A673 (cell line): ENCODE measurements at regions of chr9 and their contacts with region 1.

Region 1: GRCh38 chr9:29691758-29692407 is 2118.6 kb upstream of the C9orf72 start:
- DNase-seq: peak; percentile 89
- H3K4me3 ChIP-seq: no peak overlapping the region
- H3K27ac ChIP-seq: no peak overlapping the region
- H3K4me1 ChIP-seq: peaks cover 12% of the 10 kb centered on the region
- H3K27me3 ChIP-seq: no peaks in the 10 kb centered on the region
- CTCF ChIP-seq: peak; percentile 73

Region 2: DNA sequence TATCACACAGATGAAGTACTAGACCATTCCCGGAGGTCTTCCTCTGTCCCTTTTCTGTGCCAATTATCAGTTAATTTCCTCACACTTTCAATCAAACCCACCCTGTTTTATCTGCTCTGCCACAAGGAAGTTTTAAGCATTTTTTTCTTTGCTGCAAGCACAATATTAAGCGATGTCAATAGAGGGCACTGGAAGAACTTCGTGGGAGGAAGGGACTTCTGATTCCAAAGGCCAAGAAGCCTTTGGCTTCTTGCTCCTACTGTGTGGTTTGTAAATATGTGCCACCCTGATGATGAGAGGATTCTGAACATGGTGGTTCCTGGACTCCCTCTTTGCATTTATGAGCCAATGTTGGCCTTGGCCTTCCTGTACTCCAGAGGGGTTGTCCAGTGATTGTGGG is 406.1 kb before region 1 on chr9:
- CTCF ChIA-PET with region 1: no interaction called
- POLR2A ChIA-PET with region 1: no interaction called
- intact Hi-C with region 1: loop called (anchors 2 kb)
- DNase-seq: peak; percentile 63
- H3K4me3 ChIP-seq: no peak overlapping the region
- H3K27ac ChIP-seq: no peak overlapping the region
- H3K4me1 ChIP-seq: peaks cover 15% of the 10 kb centered on the region
- H3K27me3 ChIP-seq: no peaks in the 10 kb centered on the region
- CTCF ChIP-seq: peak; percentile 56

Region 3: GRCh38 chr9:29548436-29548835 is 143.4 kb before region 1 on chr9:
- CTCF ChIA-PET with region 1: no interaction called
- POLR2A ChIA-PET with region 1: no interaction called
- intact Hi-C with region 1: loop called (anchors 5 kb)
- DNase-seq: no peak
- H3K4me3 ChIP-seq: no peak overlapping the region
- H3K27ac ChIP-seq: no peak overlapping the region
- H3K4me1 ChIP-seq: no peaks in the 10 kb centered on the region
- H3K27me3 ChIP-seq: no peaks in the 10 kb centered on the region
- CTCF ChIP-seq: no peak

Region 4: GRCh38 chr9:29556317-29556716 is 135.6 kb before region 1 on chr9:
- CTCF ChIA-PET with region 1: no interaction called
- POLR2A ChIA-PET with region 1: no interaction called
- intact Hi-C with region 1: loop called (anchors 5 kb)
- DNase-seq: peak; percentile 94
- H3K4me3 ChIP-seq: no peak overlapping the region
- H3K27ac ChIP-seq: peak overlapping the region; percentile 81
- H3K4me1 ChIP-seq: peaks cover 20% of the 10 kb centered on the region
- H3K27me3 ChIP-seq: no peaks in the 10 kb centered on the region
- CTCF ChIP-seq: no peak

Region 5: GRCh38 chr9:29701971-29702370 is 10.1 kb after region 1 on chr9:
- CTCF ChIA-PET with region 1: no interaction called
- POLR2A ChIA-PET with region 1: no interaction called
- intact Hi-C with region 1: no loop called
- DNase-seq: no peak
- H3K4me3 ChIP-seq: no peak overlapping the region
- H3K27ac ChIP-seq: peak overlapping the region; percentile 66
- H3K4me1 ChIP-seq: peaks cover 11% of the 10 kb centered on the region
- H3K27me3 ChIP-seq: no peaks in the 10 kb centered on the region
- CTCF ChIP-seq: no peak

Region 6: DNA sequence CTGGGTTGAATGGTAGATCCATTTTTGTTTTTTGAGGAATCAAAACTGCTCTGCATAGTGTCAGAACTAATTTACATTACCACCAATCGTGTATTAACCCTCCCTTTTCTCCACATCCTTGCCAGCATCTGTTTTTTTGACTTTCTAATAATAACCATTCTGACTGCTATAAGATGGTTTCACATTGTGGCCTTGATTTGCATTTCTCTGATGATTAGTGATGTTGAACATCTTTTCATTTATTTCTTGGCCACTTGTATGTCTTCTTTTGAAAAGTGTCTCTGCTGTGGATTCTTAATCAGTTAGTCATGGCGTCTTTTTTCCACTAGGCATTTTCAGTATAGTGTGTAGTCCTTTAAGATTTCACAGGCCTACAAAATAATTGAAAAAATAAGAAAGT is 25.7 kb after region 1 on chr9:
- CTCF ChIA-PET with region 1: no interaction called
- POLR2A ChIA-PET with region 1: interaction called, 11 read pairs
- intact Hi-C with region 1: no loop called
- DNase-seq: no peak
- H3K4me3 ChIP-seq: no peak overlapping the region
- H3K27ac ChIP-seq: no peak overlapping the region
- H3K4me1 ChIP-seq: no peaks in the 10 kb centered on the region
- H3K27me3 ChIP-seq: no peaks in the 10 kb centered on the region
- CTCF ChIP-seq: no peak